HAP-1 (cell line): ENCODE measurements at regions of chr12 and their contacts with region 1.

Region 1: GRCh38 chr12:94779485-94779884 is 129.1 kb upstream of the TMCC3 start:
- DNase-seq: no peak
- H3K4me3 ChIP-seq: no peak overlapping the region
- H3K4me1 ChIP-seq: peaks cover 41% of the 10 kb centered on the region
- H3K27me3 ChIP-seq: no peaks in the 10 kb centered on the region

Region 2: DNA sequence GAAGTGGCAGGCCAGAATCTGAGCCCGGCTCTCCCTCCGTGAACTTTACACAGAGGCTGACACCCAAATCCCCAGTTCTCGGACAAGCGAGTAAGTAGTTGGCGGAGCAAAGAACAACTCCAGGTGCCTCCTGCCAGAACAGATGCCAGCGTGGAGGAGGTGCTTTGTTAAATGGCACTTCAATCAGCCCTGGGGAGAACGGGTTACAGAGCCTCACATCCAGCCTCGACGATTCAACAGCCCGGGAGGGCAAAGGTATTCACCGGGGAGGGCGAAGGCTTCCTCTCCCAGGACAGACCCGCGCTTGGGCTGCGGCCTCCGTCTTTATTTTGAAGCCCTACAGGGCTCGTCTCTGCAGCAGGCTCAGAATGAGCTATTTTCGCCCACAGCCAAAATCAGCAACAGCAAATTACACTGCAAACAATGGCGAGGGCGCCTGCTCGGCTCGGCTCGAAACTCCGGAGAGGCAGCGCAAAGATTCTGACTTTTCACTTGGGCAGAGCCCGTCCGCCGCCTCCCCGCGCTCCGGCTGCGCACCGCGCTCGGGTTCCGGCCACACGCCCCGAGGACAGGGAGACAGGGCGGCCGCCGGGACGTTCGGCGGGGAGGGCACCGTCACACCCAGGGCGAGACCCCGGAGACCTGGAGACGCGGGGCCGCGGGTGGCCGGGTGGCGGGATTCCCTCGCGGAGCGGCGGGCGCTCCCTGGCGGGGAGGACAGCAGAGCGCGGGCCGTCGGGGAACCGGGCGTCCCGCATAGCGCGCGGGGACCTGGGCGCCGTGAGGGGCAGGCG is 129.9 kb before region 1 on chr12:
- in situ Hi-C with region 1: no loop called
- DNase-seq: peak in 1 of 2 experiments; percentile 64
- H3K4me3 ChIP-seq: peak overlapping the region; percentile 59
- H3K4me1 ChIP-seq: peaks cover 15% of the 10 kb centered on the region
- H3K27me3 ChIP-seq: no peaks in the 10 kb centered on the region

Region 3: GRCh38 chr12:94875525-94875924 is 96.0 kb after region 1 on chr12:
- in situ Hi-C with region 1: loop called (anchors 10 kb)
- DNase-seq: peak; percentile 61 to 71
- H3K4me3 ChIP-seq: no peak overlapping the region
- H3K4me1 ChIP-seq: peaks cover 14% of the 10 kb centered on the region
- H3K27me3 ChIP-seq: no peaks in the 10 kb centered on the region